CD14-positive monocyte (primary cell): ENCODE measurements at regions of chr19 and their contacts with region 1.

Region 1: GRCh38 chr19:48333467-48334384 is 8.4 kb downstream of the EMP3 start:
- DNase-seq: peak; percentile 87 to 93 (median 90)
- H3K4me3 ChIP-seq: peak overlapping the region; percentile 50 to 83 (median 66)
- H3K4me3 Mint-ChIP-seq: peak overlapping the region; percentile 87 to 94
- H3K27ac ChIP-seq: peak overlapping the region; percentile 82 to 91
- H3K27ac Mint-ChIP-seq: peak overlapping the region; percentile 92 to 99 (median 96)
- H3K4me1 ChIP-seq: peaks cover 54 to 56% of the 10 kb centered on the region in 2 donors
- H3K4me1 Mint-ChIP-seq: peaks cover 56% of the 10 kb centered on the region
- H3K27me3 ChIP-seq: no peaks in the 10 kb centered on the region
- H3K27me3 Mint-ChIP-seq: peaks cover 0 to 5% (median 0%) of the 10 kb centered on the region in 3 donors
- CTCF ChIP-seq: peak; percentile 92

Region 2: DNA sequence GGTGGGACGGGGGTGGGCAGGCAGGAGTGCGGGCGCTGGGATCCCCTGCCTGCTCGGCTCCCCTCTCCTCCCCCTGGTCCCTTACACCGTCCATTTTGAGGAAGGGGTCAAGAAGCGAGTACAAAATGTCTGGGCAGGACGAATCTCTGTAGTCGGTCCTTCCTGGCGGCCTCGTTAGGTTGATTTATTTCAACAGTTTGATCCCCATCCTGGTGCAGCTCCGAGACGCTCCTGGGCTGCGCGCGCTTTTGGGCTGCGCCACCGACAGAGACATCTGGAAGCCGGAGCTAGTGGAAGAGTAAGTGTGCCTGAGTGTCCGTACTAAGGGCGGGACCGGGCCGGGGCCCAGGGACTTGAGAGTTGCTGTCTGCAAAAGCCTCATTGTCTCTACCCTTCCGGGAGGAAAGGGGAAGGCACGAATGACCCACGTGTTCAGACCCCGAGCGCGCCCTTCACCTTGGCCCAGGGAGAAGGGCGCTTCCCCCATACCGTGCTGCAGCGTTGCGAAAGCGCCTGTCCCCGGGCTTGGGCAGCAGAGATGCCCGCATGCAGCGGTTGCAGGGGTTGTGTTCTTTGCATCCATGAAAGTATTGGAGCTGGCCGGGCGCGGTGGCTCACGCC is 62.1 kb before region 1 on chr19:
- intact Hi-C with region 1: loop called in 1 of 2 experiments (anchors 5 kb)
- DNase-seq: peak; percentile 20 to 41 (median 35)
- H3K4me3 ChIP-seq: peak overlapping the region; percentile 49 to 81 (median 53)
- H3K4me3 Mint-ChIP-seq: peak overlapping the region; percentile 92 to 98
- H3K27ac ChIP-seq: no peak overlapping the region
- H3K27ac Mint-ChIP-seq: peak overlapping the region in 1 of 7 donors; percentile 63
- H3K4me1 ChIP-seq: peaks cover 14 to 17% of the 10 kb centered on the region in 2 donors
- H3K4me1 Mint-ChIP-seq: peaks cover 23% of the 10 kb centered on the region
- H3K27me3 ChIP-seq: no peaks in the 10 kb centered on the region
- H3K27me3 Mint-ChIP-seq: peaks cover 4 to 10% (median 4%) of the 10 kb centered on the region in 3 donors
- CTCF ChIP-seq: no peak